Heart left ventricle (tissue), 16 donors: ENCODE measurements at regions of chr20 and their contacts with region 1.

Region 1: GRCh38 chr20:29443819-29444218 is 1813.6 kb upstream of the DEFB115 start:
- DNase-seq: no peak
- ATAC-seq: no peak
- H3K4me3 ChIP-seq: peak overlapping the region in 1 of 12 donors; percentile 48
- H3K27ac ChIP-seq: no peak overlapping the region
- H3K4me1 ChIP-seq: no peaks in the 10 kb centered on the region
- H3K27me3 ChIP-seq: peaks cover 0 to 18% (median 0%) of the 10 kb centered on the region in 9 donors
- CTCF ChIP-seq: no peak
- POLR2A ChIP-seq: no peak

Region 2: DNA sequence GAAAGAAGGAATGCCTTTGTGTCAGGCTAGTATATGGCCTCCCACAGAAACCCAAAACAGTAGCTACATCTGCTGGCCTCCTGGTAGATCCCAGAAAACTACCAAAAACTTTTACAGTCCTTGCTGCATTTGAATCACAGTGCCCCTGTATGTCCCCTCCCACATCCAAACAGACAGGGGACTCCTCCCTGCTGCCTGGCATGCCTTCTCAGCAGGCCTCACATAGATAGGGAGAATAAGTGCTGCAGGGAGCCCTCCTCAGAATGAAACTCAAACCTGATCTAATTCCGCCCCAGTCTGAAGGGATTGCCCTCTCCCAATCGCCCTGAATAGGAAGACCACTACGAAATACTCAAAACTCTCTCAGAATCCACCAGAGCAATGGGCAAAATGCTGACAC is 1878.7 kb after region 1 on chr20:
- intact Hi-C with region 1: loop called in 1 of 10 experiments (anchors 10 kb)
- DNase-seq: no peak
- ATAC-seq: no peak
- H3K4me3 ChIP-seq: no peak overlapping the region
- H3K27ac ChIP-seq: no peak overlapping the region
- H3K4me1 ChIP-seq: no peaks in the 10 kb centered on the region
- H3K27me3 ChIP-seq: peaks cover 0 to 5% (median 0%) of the 10 kb centered on the region in 9 donors
- CTCF ChIP-seq: no peak
- POLR2A ChIP-seq: no peak